ENCODE measurements at regions of chr12 and their contacts with region 1.

Region 1: DNA sequence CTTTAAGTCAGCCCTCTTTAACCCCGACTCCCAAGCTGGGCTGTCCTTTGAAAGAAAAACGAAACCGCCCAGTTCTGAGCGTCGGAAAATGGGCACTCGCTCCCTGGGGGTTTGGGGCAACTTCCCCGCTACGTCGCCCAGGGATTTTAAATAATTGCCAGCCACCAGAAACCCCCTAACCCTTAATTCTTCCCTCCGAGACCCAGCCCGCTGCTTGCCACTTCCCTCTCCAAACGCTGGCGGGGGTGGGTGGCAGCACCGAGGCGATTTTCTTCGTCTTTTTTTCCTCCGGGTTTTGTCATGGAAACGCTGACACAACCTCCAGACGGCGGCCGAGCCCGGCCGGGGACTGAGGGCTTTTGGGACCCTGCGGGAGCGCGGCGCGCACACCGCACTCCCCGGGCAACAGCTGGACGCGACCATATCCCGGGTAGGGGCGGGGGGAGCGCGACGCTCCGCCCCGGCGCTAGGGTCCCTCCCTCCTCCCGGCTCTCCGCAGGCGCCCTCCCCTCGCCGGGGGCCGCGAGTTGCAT is at the start of gene CHST11:
- DNase-seq: peak; percentile 96
- H3K4me3 ChIP-seq: peak within 1 kb of the TSS; percentile 87 to 100 (median 94)
- H3K27ac ChIP-seq: peak within 1 kb of the TSS; percentile 84 to 93 (median 90)
- H3K4me1 ChIP-seq: peaks cover 18 to 52% (median 36%) of the 10 kb centered on the region in 6 donors
- H3K27me3 ChIP-seq: no peaks in the 10 kb centered on the region
- CTCF ChIP-seq: peak in 6 of 11 experiments; percentile 33 to 50 (median 40)
- POLR2A ChIP-seq: no peak
- total RNA-seq, gene CHST11: 45.0 to 65.1 (median 56.1) TPM

Region 2: GRCh38 chr12:104334581-104334980 is 121.9 kb before region 1 on chr12:
- intact Hi-C with region 1: no loop called
- DNase-seq: no peak
- H3K4me3 ChIP-seq: no peak overlapping the region
- H3K27ac ChIP-seq: no peak overlapping the region
- H3K4me1 ChIP-seq: no peaks in the 10 kb centered on the region
- H3K27me3 ChIP-seq: no peaks in the 10 kb centered on the region
- CTCF ChIP-seq: no peak
- POLR2A ChIP-seq: no peak

Region 3: GRCh38 chr12:104410786-104411185 is 45.7 kb before region 1 on chr12:
- intact Hi-C with region 1: no loop called
- DNase-seq: no peak
- H3K4me3 ChIP-seq: no peak overlapping the region
- H3K27ac ChIP-seq: no peak overlapping the region
- H3K4me1 ChIP-seq: peaks cover 0 to 16% (median 0%) of the 10 kb centered on the region in 6 donors
- H3K27me3 ChIP-seq: no peaks in the 10 kb centered on the region
- CTCF ChIP-seq: no peak
- POLR2A ChIP-seq: no peak

Region 4: GRCh38 chr12:104513681-104514080 is 57.2 kb after region 1 on chr12:
- intact Hi-C with region 1: loop called (anchors 2 kb)
- DNase-seq: no peak
- H3K4me3 ChIP-seq: no peak overlapping the region
- H3K27ac ChIP-seq: no peak overlapping the region
- H3K4me1 ChIP-seq: peaks cover 6 to 86% (median 39%) of the 10 kb centered on the region in 6 donors
- H3K27me3 ChIP-seq: no peaks in the 10 kb centered on the region
- CTCF ChIP-seq: no peak
- POLR2A ChIP-seq: no peak

Region 5: GRCh38 chr12:104877123-104877705 is 420.7 kb after region 1 on chr12:
- intact Hi-C with region 1: loop called (anchors 10 kb)
- DNase-seq: no peak
- H3K4me3 ChIP-seq: no peak overlapping the region
- H3K27ac ChIP-seq: no peak overlapping the region
- H3K4me1 ChIP-seq: no peaks in the 10 kb centered on the region
- H3K27me3 ChIP-seq: no peaks in the 10 kb centered on the region
- CTCF ChIP-seq: peak in 9 of 11 experiments; percentile 32 to 67 (median 60)
- POLR2A ChIP-seq: no peak

Region 6: DNA sequence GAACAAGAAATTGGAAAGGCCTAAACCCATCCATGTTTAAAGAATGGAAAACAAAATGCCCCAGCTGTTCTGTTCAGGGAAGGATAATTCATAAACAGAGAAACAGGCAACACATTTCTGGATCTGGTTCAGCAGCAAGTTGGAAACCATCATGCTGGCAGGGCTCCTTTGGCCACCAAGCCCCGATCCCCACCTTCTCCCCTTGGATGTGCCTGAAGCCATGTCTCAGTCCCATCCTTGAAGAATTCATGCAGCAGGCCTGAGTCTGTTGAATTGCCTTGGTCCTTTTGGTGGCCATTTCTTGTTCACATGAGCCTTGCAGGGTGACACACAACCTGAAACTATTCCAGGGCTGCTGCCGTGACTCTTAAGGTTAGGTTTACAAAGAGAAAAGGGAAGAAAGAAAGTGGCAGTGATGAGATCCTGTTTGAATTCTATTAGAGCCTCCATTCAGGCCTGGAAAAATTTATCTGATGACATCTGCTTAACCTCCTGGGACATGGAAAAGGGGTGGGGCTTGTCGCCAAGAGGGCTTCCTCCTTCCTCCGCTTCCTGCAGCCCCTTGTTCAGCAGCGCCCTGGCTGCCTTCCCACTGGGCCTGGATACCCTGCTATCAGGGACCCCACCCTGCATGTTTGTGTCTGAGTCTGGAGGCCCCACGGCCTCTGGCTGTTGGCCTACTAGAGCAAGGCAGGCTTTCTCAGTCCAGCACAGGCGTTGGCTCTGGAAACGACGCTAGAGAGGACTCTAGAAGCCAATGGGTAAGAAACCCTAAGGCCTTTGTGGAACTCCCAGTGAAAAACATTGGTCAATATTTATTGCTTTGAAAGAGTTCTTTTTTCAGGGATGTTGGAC is 1215.9 kb after region 1 on chr12:
- intact Hi-C with region 1: no loop called
- DNase-seq: no peak
- H3K4me3 ChIP-seq: no peak overlapping the region
- H3K27ac ChIP-seq: peak overlapping the region in 4 of 8 donors; percentile 8 to 32 (median 30)
- H3K4me1 ChIP-seq: peaks cover 0 to 7% (median 0%) of the 10 kb centered on the region in 6 donors
- H3K27me3 ChIP-seq: no peaks in the 10 kb centered on the region
- CTCF ChIP-seq: no peak
- POLR2A ChIP-seq: no peak